Activated CD8-positive, alpha-beta T cell treated with anti-CD3 and anti-CD28 coated beads for 36 hours (primary cell): ENCODE measurements at regions of chr11 and their contacts with region 1.

Region 1: DNA sequence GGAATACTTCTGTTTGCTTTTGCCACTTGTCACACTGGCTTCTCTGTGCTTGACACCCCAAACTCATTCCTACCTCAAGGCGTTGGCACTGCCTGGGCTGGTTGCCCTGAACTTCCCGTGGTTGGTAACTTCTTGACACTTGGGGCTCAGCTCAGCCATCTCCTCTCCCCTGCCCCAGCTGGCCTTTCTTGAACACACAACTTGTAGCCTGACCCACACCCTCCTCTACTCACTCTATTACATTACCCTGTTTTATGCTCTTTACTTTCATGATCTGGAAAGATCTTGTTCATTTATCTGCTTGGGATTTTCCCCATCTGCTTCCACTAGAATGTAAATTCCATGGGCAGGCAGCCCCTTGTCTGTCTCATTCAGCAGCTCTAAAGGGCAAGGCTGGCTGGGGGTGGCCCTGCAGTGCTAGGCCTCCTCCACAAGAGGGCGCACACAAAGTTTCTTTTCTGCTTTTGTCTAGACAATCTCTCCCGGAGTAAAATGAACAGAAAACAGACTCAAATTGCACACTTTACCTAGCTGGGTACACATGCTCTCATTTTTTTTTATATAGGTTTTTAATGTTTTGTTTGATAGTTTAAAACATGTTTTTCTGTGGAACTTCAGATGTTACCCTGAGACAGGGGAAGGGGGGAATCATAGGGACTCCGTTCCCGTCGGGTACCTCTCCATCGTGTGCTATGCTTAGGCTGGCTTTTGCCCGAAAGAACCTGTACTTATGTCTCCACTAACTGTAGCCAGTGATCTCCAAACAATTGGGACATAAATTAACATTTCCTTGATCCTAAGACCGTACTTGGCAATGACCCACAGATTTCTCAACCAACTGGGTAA is 16.4 kb upstream of the MRGPRX2 start:
- DNase-seq: peak; percentile 73
- ATAC-seq: peak; percentile 95
- H3K4me3 Mint-ChIP-seq: no peak overlapping the region
- H3K27ac Mint-ChIP-seq: no peak overlapping the region
- H3K4me1 Mint-ChIP-seq: no peaks in the 10 kb centered on the region
- H3K27me3 Mint-ChIP-seq: peaks cover 7% of the 10 kb centered on the region
- CTCF ChIP-seq: peak; percentile 99

Region 2: DNA sequence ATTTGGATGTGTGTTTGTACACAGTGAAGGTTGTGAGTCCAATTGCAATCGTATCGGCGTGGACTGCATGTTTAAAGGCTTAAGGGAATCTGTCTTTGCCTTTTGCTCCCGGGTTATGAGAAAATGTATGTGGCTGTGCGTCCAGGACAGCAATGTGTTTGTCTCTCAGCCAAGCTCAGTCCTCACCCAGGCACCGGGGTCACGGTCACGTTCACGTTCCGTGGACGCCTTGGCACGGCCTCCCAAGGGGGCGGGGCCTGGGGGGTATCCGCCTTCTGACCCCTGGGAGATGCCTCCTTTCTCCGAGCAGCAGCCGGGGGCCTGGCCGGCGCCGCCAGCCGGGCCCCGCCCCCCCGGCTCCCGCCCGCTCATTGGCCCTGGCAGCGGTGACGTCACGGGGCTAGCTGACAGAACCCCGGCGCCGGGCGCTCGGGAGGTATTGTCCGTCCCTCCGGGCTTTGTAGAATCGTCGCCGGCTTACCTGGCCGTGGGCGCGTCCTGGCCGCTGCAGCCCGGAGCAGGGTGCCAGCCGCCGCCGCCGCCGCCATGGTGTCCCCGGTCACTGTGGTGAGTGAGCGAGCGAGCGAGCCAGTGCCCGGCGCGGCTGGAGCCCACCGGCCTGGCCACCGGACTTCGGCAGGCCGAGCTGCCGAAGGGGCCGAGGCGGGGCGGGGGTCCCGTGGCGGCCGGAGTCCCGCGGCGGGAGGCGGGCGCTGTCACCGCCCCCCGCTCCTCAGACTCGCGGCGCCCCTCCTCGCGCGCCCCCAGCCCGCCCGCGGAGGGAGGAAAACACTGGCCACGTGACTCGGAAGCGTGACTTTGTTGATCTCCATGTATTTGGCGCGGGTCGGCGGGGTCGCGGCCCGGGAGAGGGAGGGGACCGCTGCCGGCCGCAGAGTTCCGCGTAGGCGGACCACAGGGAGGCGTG is 378.4 kb before region 1 on chr11 and contains the start of gene TMEM86A:
- CTCF ChIA-PET with region 1: no interaction called
- POLR2A ChIA-PET with region 1: no interaction called
- intact Hi-C with region 1: no loop called
- DNase-seq: peak; percentile 92
- ATAC-seq: peak; percentile 95
- H3K4me3 Mint-ChIP-seq: peak within 1 kb of the TSS; percentile 74
- H3K27ac Mint-ChIP-seq: peak within 1 kb of the TSS; percentile 55
- H3K4me1 Mint-ChIP-seq: peaks cover 13% of the 10 kb centered on the region
- H3K27me3 Mint-ChIP-seq: no peaks in the 10 kb centered on the region
- CTCF ChIP-seq: no peak
- total RNA-seq, gene TMEM86A: 0.11 to 0.34 TPM

Region 3: DNA sequence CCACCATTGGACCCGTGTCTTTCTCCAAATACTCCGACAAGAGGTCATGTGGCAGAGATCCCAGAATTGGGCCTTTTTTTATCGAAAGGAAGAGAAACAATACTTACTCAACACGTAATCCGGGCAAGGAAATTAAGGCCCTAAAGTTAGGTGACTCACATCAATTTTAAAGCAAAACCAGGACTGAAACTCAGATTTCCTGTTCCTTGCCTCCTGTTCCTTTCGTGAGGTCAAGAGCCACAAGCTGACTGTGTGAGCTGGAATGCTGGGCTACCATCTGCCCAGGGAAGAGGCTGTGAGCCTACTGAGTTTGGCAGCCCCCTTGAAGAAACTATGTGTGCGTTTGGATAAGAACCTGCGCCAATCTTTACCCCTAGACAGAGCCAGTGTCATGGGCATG is 10.7 kb after region 1 on chr11:
- CTCF ChIA-PET with region 1: interaction called, 17 read pairs
- POLR2A ChIA-PET with region 1: no interaction called
- intact Hi-C with region 1: no loop called
- DNase-seq: no peak
- ATAC-seq: no peak
- H3K4me3 Mint-ChIP-seq: no peak overlapping the region
- H3K27ac Mint-ChIP-seq: no peak overlapping the region
- H3K4me1 Mint-ChIP-seq: no peaks in the 10 kb centered on the region
- H3K27me3 Mint-ChIP-seq: peaks cover 13% of the 10 kb centered on the region
- CTCF ChIP-seq: no peak